ENCODE measurements at regions of chr10 and their contacts with region 1.

Region 1: DNA sequence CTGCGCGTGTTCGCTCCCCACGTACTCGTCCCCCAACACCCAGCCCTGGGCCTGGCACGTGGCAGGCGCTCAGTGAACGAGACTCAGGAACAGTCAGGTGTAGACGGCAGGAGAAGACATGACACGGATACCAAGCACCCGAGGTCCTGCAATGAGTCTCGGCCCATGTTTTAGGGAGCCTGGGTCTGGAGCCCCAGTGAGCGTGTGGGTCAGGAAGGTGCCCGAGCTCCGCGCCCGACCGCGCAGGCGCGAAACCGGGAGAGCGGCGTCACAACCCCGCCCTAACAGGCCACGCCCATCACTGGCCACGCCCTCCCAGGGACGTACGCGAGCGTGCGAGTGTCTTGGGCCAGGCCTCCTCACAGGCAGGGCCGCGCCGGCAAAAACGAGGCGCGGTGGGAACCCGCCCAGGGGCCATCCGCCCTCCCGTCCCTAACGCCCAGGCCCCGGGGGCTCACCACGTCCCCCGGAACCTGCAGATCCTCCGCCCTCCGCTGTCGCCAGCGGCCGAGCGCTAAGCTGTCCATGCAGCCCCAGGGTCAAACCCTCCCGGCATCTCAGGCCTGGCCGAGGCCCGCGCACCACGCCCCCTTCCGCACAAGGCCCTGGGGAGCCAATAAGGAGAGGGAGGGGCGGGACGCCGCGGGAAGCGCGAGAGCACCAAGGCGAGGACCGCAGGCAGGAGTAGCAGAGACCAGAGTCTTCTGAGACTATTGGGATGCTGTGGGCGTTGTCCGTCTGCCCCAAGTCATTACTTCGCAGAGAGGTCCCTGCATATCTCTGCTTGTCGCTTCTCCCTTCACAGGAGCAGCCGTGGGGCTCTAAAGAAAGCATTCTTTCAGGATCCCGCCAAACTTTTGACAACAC is at the start of gene C10orf143:
- DNase-seq: peak; percentile 96 to 100 (median 98)
- ATAC-seq: peak; percentile 76
- H3K4me3 ChIP-seq: peak within 1 kb of the TSS; percentile 70
- H3K4me3 Mint-ChIP-seq: peak within 1 kb of the TSS; percentile 99
- H3K27ac ChIP-seq: peak within 1 kb of the TSS; percentile 90 to 91
- H3K27ac Mint-ChIP-seq: peak within 1 kb of the TSS; percentile 96
- H3K4me1 ChIP-seq: peaks cover 36% of the 10 kb centered on the region
- H3K4me1 Mint-ChIP-seq: peaks cover 66% of the 10 kb centered on the region
- H3K27me3 ChIP-seq: no peaks in the 10 kb centered on the region
- H3K27me3 Mint-ChIP-seq: no peaks in the 10 kb centered on the region
- CTCF ChIP-seq: no peak
- total RNA-seq, gene C10orf143: 4.3 to 5.8 TPM

Region 2: DNA sequence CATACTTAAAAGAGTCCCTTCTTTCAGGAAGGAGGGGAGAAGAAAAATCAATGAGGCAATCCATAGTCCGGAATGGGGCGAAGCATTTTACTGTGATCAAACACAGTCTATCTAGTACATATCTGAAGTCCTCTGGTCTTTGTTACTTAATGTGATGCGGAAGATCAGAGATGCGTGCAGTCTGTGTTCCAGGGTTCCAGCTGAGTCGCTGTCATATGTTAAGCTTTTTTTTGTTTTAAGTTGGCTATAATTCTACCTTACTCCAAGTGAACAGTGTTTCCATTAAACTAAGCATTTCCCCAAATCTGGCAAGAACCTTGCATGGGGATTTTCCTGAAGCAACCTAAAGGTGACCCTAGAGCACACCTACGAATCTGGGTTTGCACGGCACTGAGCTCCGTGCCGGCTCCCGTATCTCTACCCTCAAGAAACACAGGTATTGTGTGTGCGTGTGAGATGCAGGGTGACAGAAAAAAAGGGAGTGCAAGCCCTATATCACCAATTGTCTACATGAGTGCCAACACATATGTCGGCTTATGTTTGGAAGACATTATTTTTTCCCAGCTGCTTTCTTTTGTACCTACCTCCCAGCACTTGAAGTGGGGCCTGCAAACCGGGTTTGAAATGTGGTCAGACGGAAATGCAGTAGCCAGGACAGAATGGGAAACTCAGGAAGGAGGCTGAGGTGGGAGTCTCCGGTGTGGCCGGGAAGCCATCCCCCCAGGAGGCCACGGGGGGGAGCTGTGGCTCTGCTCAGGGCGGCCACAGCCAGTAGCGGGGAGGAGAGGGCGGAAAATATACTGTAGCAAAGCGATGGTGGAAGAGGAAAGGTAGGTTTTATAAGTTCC is 1079.3 kb before region 1 on chr10:
- CTCF ChIA-PET with region 1: no interaction called
- POLR2A ChIA-PET with region 1: interaction called, 12 read pairs
- intact Hi-C with region 1: loop called in 1 of 2 experiments (anchors 5 kb)
- DNase-seq: peak in 13 of 14 experiments; percentile 20 to 76 (median 42)
- ATAC-seq: peak; percentile 45
- H3K4me3 ChIP-seq: no peak overlapping the region
- H3K4me3 Mint-ChIP-seq: no peak overlapping the region
- H3K27ac ChIP-seq: no peak overlapping the region
- H3K27ac Mint-ChIP-seq: no peak overlapping the region
- H3K4me1 ChIP-seq: peaks cover 11% of the 10 kb centered on the region
- H3K4me1 Mint-ChIP-seq: peaks cover 37% of the 10 kb centered on the region
- H3K27me3 ChIP-seq: no peaks in the 10 kb centered on the region
- H3K27me3 Mint-ChIP-seq: peaks cover 28% of the 10 kb centered on the region
- CTCF ChIP-seq: peak; percentile 82

Region 3: DNA sequence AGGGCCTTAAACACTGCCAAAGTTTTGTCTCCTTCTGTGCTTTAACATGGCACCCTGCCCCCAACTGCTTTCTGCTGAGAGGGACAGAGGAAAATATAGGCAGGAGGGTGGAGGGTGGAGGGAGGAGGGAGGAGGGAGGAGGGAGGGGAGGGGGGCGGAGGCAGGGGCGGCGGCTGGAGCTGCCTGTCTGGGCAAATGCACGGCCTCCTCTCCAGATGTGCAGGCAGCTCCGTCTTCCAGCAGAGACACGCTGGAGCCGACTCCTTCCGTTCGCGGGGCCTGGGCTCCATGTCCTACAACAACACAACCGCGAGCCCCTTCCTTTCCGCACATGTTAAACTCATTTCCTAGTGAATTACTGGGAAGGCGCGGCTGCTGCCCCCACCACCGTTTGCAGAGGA is 160.6 kb before region 1 on chr10:
- CTCF ChIA-PET with region 1: no interaction called
- POLR2A ChIA-PET with region 1: no interaction called
- intact Hi-C with region 1: loop called in 1 of 2 experiments (anchors 10 kb)
- DNase-seq: no peak
- ATAC-seq: no peak
- H3K4me3 ChIP-seq: no peak overlapping the region
- H3K4me3 Mint-ChIP-seq: no peak overlapping the region
- H3K27ac ChIP-seq: no peak overlapping the region
- H3K27ac Mint-ChIP-seq: no peak overlapping the region
- H3K4me1 ChIP-seq: no peaks in the 10 kb centered on the region
- H3K4me1 Mint-ChIP-seq: no peaks in the 10 kb centered on the region
- H3K27me3 ChIP-seq: peaks cover 18 to 26% of the 10 kb centered on the region in 2 experiments
- H3K27me3 Mint-ChIP-seq: peaks cover 71% of the 10 kb centered on the region
- CTCF ChIP-seq: no peak

Region 4: GRCh38 chr10:130127364-130128061 is 17.0 kb after region 1 on chr10:
- CTCF ChIA-PET with region 1: interaction called, 26 read pairs
- POLR2A ChIA-PET with region 1: interaction called, 28 read pairs
- intact Hi-C with region 1: no loop called
- DNase-seq: peak in 13 of 14 experiments; percentile 29 to 80 (median 39)
- ATAC-seq: peak; percentile 93
- H3K4me3 ChIP-seq: no peak overlapping the region
- H3K4me3 Mint-ChIP-seq: no peak overlapping the region
- H3K27ac ChIP-seq: no peak overlapping the region
- H3K27ac Mint-ChIP-seq: no peak overlapping the region
- H3K4me1 ChIP-seq: peaks cover 4% of the 10 kb centered on the region
- H3K4me1 Mint-ChIP-seq: peaks cover 5% of the 10 kb centered on the region
- H3K27me3 ChIP-seq: peaks cover 7 to 17% of the 10 kb centered on the region in 2 experiments
- H3K27me3 Mint-ChIP-seq: peaks cover 33% of the 10 kb centered on the region
- CTCF ChIP-seq: peak; percentile 92

Region 5: GRCh38 chr10:130141878-130142277 is 31.4 kb after region 1 on chr10:
- CTCF ChIA-PET with region 1: interaction called, 30 read pairs
- POLR2A ChIA-PET with region 1: interaction called, 212 read pairs
- intact Hi-C with region 1: no loop called
- DNase-seq: peak in 3 of 14 experiments; percentile 19 to 30 (median 20)
- ATAC-seq: peak; percentile 76
- H3K4me3 ChIP-seq: no peak overlapping the region
- H3K4me3 Mint-ChIP-seq: peak overlapping the region; percentile 17
- H3K27ac ChIP-seq: no peak overlapping the region
- H3K27ac Mint-ChIP-seq: peak overlapping the region; percentile 16
- H3K4me1 ChIP-seq: peaks cover 51% of the 10 kb centered on the region
- H3K4me1 Mint-ChIP-seq: peaks cover 64% of the 10 kb centered on the region
- H3K27me3 ChIP-seq: no peaks in the 10 kb centered on the region
- H3K27me3 Mint-ChIP-seq: no peaks in the 10 kb centered on the region
- CTCF ChIP-seq: no peak

Region 6: GRCh38 chr10:130301021-130301892 is 190.8 kb after region 1 on chr10:
- CTCF ChIA-PET with region 1: no interaction called
- POLR2A ChIA-PET with region 1: interaction called, 70 read pairs
- intact Hi-C with region 1: loop called in 1 of 2 experiments (anchors 2 kb)
- DNase-seq: peak; percentile 8 to 73 (median 50)
- ATAC-seq: peak; percentile 69
- H3K4me3 ChIP-seq: peak overlapping the region; percentile 31
- H3K4me3 Mint-ChIP-seq: peak overlapping the region; percentile 93
- H3K27ac ChIP-seq: peak overlapping the region in 1 of 2 donors; percentile 13
- H3K27ac Mint-ChIP-seq: peak overlapping the region; percentile 94
- H3K4me1 ChIP-seq: no peaks in the 10 kb centered on the region
- H3K4me1 Mint-ChIP-seq: peaks cover 18% of the 10 kb centered on the region
- H3K27me3 ChIP-seq: no peaks in the 10 kb centered on the region
- H3K27me3 Mint-ChIP-seq: no peaks in the 10 kb centered on the region
- CTCF ChIP-seq: no peak

Measured in CD4-positive, alpha-beta T cell (primary cell).